ENCODE measurements at regions of chr11 and their contacts with region 1.

Region 1: GRCh38 chr11:122910775-122911174 is 28.2 kb downstream of the JHY start:
- DNase-seq: no peak
- H3K4me3 ChIP-seq: no peak overlapping the region
- H3K27ac ChIP-seq: no peak overlapping the region
- H3K4me1 ChIP-seq: no peaks in the 10 kb centered on the region
- H3K27me3 ChIP-seq: no peaks in the 10 kb centered on the region
- CTCF ChIP-seq: peak in 1 of 4 experiments; percentile 14
- POLR2A ChIP-seq: no peak

Region 2: DNA sequence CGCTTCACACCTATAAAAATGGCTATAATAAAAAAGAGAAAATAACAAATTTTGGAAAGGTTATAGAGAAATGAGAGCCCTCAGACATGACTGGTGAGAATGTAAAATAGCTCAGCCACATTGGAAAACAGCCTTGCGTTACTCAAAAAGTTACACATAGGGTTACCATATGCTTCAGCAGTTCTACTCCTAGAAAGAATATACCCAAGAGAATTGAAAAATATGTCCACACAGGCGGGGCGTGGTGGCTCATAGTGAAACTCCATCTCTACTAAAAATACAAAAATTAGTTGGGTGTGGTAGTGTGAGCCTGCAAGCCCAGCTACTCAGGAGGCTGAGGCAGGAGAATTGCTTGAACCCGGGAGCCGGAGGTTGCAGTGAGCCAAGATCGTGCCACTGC is 35.8 kb before region 1 on chr11:
- intact Hi-C with region 1: no loop called
- DNase-seq: no peak
- H3K4me3 ChIP-seq: no peak overlapping the region
- H3K27ac ChIP-seq: no peak overlapping the region
- H3K4me1 ChIP-seq: no peaks in the 10 kb centered on the region
- H3K27me3 ChIP-seq: no peaks in the 10 kb centered on the region
- CTCF ChIP-seq: no peak
- POLR2A ChIP-seq: no peak

Region 3: GRCh38 chr11:123020968-123021367 is 110.2 kb after region 1 on chr11:
- intact Hi-C with region 1: loop called (anchors 5 kb)
- DNase-seq: no peak
- H3K4me3 ChIP-seq: no peak overlapping the region
- H3K27ac ChIP-seq: no peak overlapping the region
- H3K4me1 ChIP-seq: no peaks in the 10 kb centered on the region
- H3K27me3 ChIP-seq: no peaks in the 10 kb centered on the region
- CTCF ChIP-seq: no peak
- POLR2A ChIP-seq: no peak